ENCODE measurements at regions of chr2 and their contacts with region 1.

Region 1: GRCh38 chr2:160493227-160494028 is at the start of gene RBMS1:
- DNase-seq: peak; percentile 71 to 89 (median 88)
- ATAC-seq: peak; percentile 78 to 85
- H3K4me3 ChIP-seq: peak within 1 kb of the TSS; percentile 96
- H3K27ac ChIP-seq: peak within 1 kb of the TSS; percentile 99
- H3K4me1 ChIP-seq: no peaks in the 10 kb centered on the region
- H3K27me3 ChIP-seq: no peaks in the 10 kb centered on the region
- total RNA-seq, gene RBMS1: 56.8 to 73.5 (median 66.8) TPM

Region 2: GRCh38 chr2:160157861-160158829 is 335.3 kb before region 1 on chr2:
- intact Hi-C with region 1: no loop called
- DNase-seq: no peak
- ATAC-seq: peak; percentile 75 to 80
- H3K4me3 ChIP-seq: no peak overlapping the region
- H3K27ac ChIP-seq: no peak overlapping the region
- H3K4me1 ChIP-seq: no peaks in the 10 kb centered on the region
- H3K27me3 ChIP-seq: no peaks in the 10 kb centered on the region

Region 3: GRCh38 chr2:160332318-160332717 is 161.1 kb before region 1 on chr2:
- intact Hi-C with region 1: loop called in 1 of 4 experiments (anchors 10 kb)
- DNase-seq: no peak
- ATAC-seq: peak; percentile 73 to 79
- H3K4me3 ChIP-seq: no peak overlapping the region
- H3K27ac ChIP-seq: no peak overlapping the region
- H3K4me1 ChIP-seq: peaks cover 21% of the 10 kb centered on the region
- H3K27me3 ChIP-seq: no peaks in the 10 kb centered on the region

Region 4: DNA sequence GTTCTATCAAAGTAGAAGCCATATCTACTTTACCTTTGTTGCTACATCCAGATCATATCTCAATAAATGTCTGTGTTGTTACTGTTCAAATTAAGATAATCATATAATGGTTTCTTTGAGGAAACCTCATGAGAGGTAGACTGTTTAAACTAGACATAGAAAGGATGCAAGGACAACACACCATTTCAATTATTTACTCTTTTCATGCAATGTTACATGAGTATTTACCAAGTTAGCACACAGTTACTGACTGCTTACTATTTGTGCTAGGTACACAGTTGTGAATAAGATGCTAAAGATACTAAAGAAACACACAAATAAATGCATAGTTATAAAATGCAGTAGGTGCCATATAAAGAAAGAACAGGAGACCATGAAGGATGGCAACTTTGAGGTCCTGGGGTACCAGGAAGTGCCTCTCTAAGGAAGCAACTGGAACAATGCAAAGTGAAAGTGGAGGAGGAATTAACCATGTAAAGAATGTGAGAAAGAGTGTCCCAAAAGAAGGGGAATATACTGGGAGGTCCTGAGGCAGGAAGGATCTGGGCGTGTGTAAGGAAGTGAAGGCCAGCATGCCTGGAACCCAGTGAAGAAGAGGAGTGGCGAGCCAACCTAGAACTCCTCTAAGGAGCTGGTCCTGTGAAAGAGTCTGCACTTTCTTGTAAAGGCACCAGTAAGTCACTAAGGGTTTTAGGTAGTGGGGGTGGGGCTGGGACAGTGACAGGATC is 39.2 kb before region 1 on chr2:
- intact Hi-C with region 1: loop called in 1 of 4 experiments (anchors 5 kb)
- DNase-seq: no peak
- ATAC-seq: peak in 1 of 2 donors; percentile 57
- H3K4me3 ChIP-seq: no peak overlapping the region
- H3K27ac ChIP-seq: no peak overlapping the region
- H3K4me1 ChIP-seq: peaks cover 19% of the 10 kb centered on the region
- H3K27me3 ChIP-seq: no peaks in the 10 kb centered on the region

Region 5: DNA sequence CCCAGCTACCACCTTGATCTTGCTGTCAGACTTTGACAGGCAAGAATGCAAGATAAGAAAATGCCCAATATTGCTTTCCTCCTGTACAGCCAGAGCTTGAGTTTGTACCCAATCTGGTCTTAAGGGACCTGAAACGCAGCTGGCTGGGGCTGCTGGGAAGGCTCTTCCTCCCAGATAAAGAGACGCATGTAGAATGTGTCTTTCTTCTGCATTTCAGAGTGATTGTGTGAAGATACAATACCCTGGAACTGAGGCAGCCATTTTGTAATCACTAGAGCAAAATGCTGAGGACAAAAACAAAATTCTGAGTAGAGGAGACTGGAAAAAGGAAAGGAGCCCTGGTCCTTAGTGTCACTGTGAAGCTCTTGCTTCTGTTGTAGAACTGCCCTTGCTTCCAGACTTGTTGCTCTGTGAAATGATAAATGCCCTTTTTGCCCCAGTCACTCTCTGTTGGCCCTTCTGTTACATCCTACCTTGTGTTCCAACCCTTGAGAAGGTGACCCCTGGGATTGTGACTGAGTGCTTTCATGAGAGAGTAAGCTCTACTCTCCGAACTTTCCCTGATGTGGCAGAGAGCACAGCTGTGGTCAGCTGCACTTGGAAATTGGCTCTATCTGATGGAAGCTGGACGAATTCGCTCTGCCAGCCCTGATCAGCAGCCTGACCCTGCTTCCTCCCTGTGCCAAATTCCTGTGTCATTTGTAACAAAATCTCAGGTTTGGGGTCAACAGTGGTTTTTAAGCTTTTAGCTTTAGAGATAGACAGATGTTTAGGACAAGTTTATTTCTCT is 137.6 kb after region 1 on chr2:
- intact Hi-C with region 1: loop called in 1 of 4 experiments (anchors 10 kb)
- DNase-seq: peak; percentile 53 to 78 (median 73)
- ATAC-seq: peak; percentile 64 to 73
- H3K4me3 ChIP-seq: no peak overlapping the region
- H3K27ac ChIP-seq: no peak overlapping the region
- H3K4me1 ChIP-seq: peaks cover 3% of the 10 kb centered on the region
- H3K27me3 ChIP-seq: no peaks in the 10 kb centered on the region

Region 6: DNA sequence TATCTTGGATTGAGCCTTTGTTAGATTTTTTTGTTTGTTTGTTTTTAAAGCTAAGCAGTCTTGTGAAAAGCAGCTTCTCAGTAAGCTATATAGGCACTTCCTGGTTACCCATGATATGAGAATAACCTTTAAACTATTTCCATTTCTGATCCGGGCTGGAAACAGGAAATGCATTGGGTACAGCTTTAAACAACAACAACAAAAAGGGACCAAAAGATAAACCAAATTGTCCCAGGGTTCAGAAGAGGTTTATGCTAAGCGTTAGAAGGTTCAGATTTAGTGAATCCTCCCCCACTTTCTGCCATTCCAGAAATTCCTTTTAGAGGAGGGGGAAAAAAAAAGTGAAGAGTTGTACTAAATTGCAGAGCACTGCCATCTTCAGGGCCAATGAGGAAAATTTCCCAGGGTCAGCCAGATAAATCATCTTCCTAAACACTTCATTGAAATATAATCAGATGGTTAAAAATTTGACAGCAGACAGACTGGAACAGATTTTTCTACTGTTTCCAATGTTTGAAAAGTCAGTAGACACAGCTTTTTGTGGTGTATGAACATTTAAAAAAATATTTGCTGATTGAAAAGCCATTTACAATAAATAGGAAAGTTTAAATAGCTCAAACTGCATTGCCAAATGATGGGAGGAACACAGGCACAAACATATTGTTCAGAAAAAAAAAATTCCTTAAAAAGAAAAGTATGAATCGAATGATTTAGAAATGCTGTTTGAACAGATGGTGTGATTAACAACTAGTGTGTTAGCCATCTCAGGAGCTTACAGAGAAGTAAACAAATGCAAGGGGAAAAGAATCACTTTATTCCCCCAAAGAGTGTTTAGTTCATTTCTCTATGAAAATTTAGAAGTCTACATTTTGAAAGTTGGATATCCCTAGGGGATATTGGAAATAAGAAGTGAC is 476.9 kb after region 1 on chr2:
- intact Hi-C with region 1: loop called in 2 of 4 experiments (anchors 5 to 10 kb)
- DNase-seq: peak in 1 of 3 donors; percentile 65
- ATAC-seq: peak; percentile 81 to 83
- H3K4me3 ChIP-seq: peak overlapping the region; percentile 51
- H3K27ac ChIP-seq: no peak overlapping the region
- H3K4me1 ChIP-seq: no peaks in the 10 kb centered on the region
- H3K27me3 ChIP-seq: no peaks in the 10 kb centered on the region